Mammary epithelial cell (primary cell): ENCODE measurements at regions of chr10 and their contacts with region 1.

Region 1: GRCh38 chr10:113126229-113127201 is 176.5 kb downstream of the TCF7L2 start:
- DNase-seq: peak; percentile 63
- H3K4me3 ChIP-seq: peak overlapping the region; percentile 21 to 38 (median 29)
- H3K27ac ChIP-seq: peak overlapping the region; percentile 7
- H3K4me1 ChIP-seq: peaks cover 9% of the 10 kb centered on the region
- H3K27me3 ChIP-seq: no peaks in the 10 kb centered on the region
- CTCF ChIP-seq: peak; percentile 49 to 60

Region 2: DNA sequence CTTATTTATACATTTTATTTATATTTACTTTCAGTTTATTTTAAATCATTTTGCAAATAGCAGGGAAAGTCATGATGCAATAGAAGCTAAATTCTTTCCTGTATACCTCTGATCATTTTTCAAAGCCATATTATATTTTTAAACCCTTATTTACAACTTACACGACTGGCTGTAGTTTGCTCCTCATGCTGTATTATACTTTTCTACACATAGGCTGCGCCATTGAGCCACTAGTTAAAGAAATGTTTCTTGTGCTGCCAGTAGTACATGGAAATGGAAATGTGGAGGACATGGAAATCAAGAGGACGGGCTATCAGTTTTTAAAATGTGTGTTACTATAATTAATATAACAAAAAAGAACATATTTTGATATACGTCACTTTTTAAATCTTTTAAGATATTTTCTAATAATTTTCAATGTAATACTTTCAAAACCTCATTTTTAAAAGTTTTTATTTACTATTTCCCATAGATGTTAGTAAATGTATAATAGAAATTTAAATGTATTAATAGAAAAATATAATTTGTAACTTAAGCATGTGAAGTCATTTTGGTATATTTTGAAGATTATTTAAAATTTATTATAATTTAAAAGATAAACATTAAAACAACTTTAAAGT is 561.0 kb before region 1 on chr10:
- CTCF ChIA-PET with region 1: no interaction called
- dilution Hi-C with region 1: no loop called
- in situ Hi-C with region 1: loop called (anchors 25 kb)
- intact Hi-C with region 1: loop called (anchors 1 kb)
- DNase-seq: peak; percentile 53
- H3K4me3 ChIP-seq: no peak overlapping the region
- H3K27ac ChIP-seq: no peak overlapping the region
- H3K4me1 ChIP-seq: no peaks in the 10 kb centered on the region
- H3K27me3 ChIP-seq: no peaks in the 10 kb centered on the region
- CTCF ChIP-seq: peak; percentile 77 to 82

Region 3: GRCh38 chr10:112721080-112721698 is 405.3 kb before region 1 on chr10:
- CTCF ChIA-PET with region 1: no interaction called
- dilution Hi-C with region 1: no loop called
- in situ Hi-C with region 1: no loop called
- intact Hi-C with region 1: loop called (anchors 1 kb)
- DNase-seq: no peak
- H3K4me3 ChIP-seq: no peak overlapping the region
- H3K27ac ChIP-seq: no peak overlapping the region
- H3K4me1 ChIP-seq: peaks cover 10% of the 10 kb centered on the region
- H3K27me3 ChIP-seq: no peaks in the 10 kb centered on the region
- CTCF ChIP-seq: peak; percentile 54 to 62

Region 4: GRCh38 chr10:112919721-112920120 is 206.8 kb before region 1 on chr10:
- CTCF ChIA-PET with region 1: no interaction called
- dilution Hi-C with region 1: no loop called
- in situ Hi-C with region 1: no loop called
- intact Hi-C with region 1: no loop called
- DNase-seq: peak; percentile 89
- H3K4me3 ChIP-seq: no peak overlapping the region
- H3K27ac ChIP-seq: no peak overlapping the region
- H3K4me1 ChIP-seq: peaks cover 13% of the 10 kb centered on the region
- H3K27me3 ChIP-seq: no peaks in the 10 kb centered on the region
- CTCF ChIP-seq: no peak

Region 5: DNA sequence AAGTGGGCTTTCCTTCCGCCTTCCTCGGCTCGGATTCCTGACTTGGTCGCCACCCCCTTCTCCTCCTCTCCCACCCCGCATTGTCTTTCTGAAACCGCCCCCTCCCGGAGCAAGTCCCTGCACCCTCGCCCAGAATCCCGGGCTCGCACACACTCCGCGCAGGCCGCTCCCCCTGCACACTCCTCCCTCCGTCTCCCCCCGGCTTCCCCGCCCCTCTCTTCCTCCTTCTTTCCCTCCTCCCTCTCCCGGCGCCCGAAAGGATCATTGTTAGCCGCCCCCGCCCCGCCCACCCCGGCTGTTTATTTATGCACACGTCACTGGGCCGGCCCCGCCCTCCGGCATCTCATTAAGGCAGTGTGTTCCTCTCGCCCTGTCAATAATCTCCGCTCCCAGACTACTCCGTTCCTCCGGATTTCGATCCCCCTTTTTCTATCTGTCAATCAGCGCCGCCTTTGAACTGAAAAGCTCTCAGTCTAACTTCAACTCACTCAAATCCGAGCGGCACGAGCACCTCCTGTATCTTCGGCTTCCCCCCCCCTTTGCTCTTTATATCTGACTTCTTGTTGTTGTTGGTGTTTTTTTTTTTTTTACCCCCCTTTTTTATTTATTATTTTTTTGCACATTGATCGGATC is 176.5 kb before region 1 on chr10 and contains the start of gene TCF7L2:
- CTCF ChIA-PET with region 1: no interaction called
- dilution Hi-C with region 1: no loop called
- in situ Hi-C with region 1: no loop called
- intact Hi-C with region 1: loop called (anchors 1 kb)
- DNase-seq: peak; percentile 96
- H3K4me3 ChIP-seq: peak within 1 kb of the TSS; percentile 71 to 93 (median 77)
- H3K27ac ChIP-seq: peak within 1 kb of the TSS; percentile 89
- H3K4me1 ChIP-seq: peaks cover 19% of the 10 kb centered on the region
- H3K27me3 ChIP-seq: no peaks in the 10 kb centered on the region
- CTCF ChIP-seq: no peak
- total RNA-seq, gene TCF7L2: 7.7 to 19.4 TPM

Region 6: GRCh38 chr10:113362645-113363433 is 236.3 kb after region 1 on chr10:
- CTCF ChIA-PET with region 1: no interaction called
- dilution Hi-C with region 1: no loop called
- in situ Hi-C with region 1: no loop called
- intact Hi-C with region 1: no loop called
- DNase-seq: peak; percentile 54
- H3K4me3 ChIP-seq: no peak overlapping the region
- H3K27ac ChIP-seq: no peak overlapping the region
- H3K4me1 ChIP-seq: peaks cover 5% of the 10 kb centered on the region
- H3K27me3 ChIP-seq: peaks cover 13% of the 10 kb centered on the region
- CTCF ChIP-seq: no peak

Region 7: GRCh38 chr10:113385021-113385999 is 258.8 kb after region 1 on chr10:
- CTCF ChIA-PET with region 1: no interaction called
- dilution Hi-C with region 1: no loop called
- in situ Hi-C with region 1: no loop called
- intact Hi-C with region 1: loop called (anchors 2 kb)
- DNase-seq: peak; percentile 68
- H3K4me3 ChIP-seq: no peak overlapping the region
- H3K27ac ChIP-seq: no peak overlapping the region
- H3K4me1 ChIP-seq: no peaks in the 10 kb centered on the region
- H3K27me3 ChIP-seq: peaks cover 5% of the 10 kb centered on the region
- CTCF ChIP-seq: peak; percentile 68 to 92

Region 8: DNA sequence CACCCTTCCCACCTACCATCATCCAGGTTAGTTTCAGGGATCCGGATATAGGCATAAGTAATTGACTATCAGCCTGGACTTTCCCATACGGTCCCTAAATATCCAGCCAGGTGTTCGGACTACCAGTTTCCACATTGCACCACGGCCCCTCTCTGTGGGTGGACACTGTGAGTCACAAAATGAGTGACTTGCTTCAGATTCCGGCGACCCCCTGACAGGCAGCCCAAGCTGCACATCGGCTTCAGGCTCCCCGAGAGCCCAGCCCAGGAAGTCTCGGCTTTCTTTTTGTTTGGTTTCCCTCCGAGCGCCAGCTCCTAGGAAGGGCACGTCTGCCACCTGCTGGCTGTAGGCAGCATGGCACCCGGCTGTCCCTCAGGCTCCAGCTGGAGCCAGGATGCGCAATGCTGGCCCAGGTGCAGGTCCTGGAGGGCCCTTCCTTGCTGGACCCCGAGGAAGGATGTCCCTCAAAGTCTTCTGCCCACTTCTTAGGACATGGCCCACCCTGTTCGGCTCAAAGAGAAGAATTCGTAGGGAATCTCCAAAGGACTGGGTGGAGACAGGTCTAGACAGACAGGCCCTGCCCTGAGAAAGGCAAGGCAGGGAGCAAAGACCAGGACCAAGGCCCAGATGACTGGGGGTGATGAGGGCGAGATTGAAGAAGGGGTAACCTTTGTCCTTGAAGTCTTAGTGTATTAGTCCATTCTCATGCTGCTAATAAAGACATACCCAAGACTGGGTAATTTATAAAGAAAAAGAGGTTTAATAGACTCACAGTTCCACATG is 437.0 kb after region 1 on chr10:
- CTCF ChIA-PET with region 1: no interaction called
- dilution Hi-C with region 1: no loop called
- in situ Hi-C with region 1: no loop called
- intact Hi-C with region 1: loop called (anchors 2 kb)
- DNase-seq: peak; percentile 48
- H3K4me3 ChIP-seq: peak overlapping the region; percentile 29 to 43 (median 41)
- H3K27ac ChIP-seq: no peak overlapping the region
- H3K4me1 ChIP-seq: peaks cover 3% of the 10 kb centered on the region
- H3K27me3 ChIP-seq: no peaks in the 10 kb centered on the region
- CTCF ChIP-seq: peak; percentile 98